ENCODE measurements at regions of chr14 and their contacts with region 1.

Region 1: GRCh38 chr14:100645192-100645990 is 58.2 kb upstream of the BEGAIN start:
- DNase-seq: peak; percentile 81
- H3K4me3 Mint-ChIP-seq: peak overlapping the region; percentile 34
- H3K27ac Mint-ChIP-seq: peak overlapping the region; percentile 20
- H3K4me1 Mint-ChIP-seq: peaks cover 45% of the 10 kb centered on the region
- H3K27me3 Mint-ChIP-seq: peaks cover 9% of the 10 kb centered on the region

Region 2: DNA sequence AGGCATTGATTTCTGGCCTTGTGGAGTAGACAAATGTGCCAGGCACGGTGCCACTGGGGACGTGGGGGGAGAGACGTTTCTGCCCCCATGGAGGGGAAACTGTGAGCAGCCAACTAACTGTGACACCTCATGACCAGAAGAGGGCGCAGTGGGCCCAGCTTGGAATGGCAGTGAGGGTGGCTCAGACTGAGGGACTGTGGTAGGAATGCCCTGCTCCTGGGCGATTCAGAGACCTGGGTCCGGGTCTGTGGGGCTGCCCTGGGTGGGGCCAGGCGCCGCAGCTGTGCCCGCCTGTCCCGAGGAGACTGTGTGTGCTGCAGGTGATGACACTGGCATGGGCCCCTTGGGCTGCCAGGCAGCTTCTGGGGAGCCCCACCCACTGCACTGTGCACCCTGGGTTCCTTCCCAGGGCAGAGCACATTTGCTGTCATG is 261.6 kb before region 1 on chr14:
- intact Hi-C with region 1: loop called (anchors 1 kb)
- DNase-seq: peak; percentile 53
- H3K4me3 Mint-ChIP-seq: no peak overlapping the region
- H3K27ac Mint-ChIP-seq: no peak overlapping the region
- H3K4me1 Mint-ChIP-seq: peaks cover 7% of the 10 kb centered on the region
- H3K27me3 Mint-ChIP-seq: no peaks in the 10 kb centered on the region

Region 3: GRCh38 chr14:100547633-100548294 is 97.6 kb before region 1 on chr14:
- intact Hi-C with region 1: loop called (anchors 5 kb)
- DNase-seq: peak; percentile 22
- H3K4me3 Mint-ChIP-seq: peak overlapping the region; percentile 7
- H3K27ac Mint-ChIP-seq: no peak overlapping the region
- H3K4me1 Mint-ChIP-seq: peaks cover 8% of the 10 kb centered on the region
- H3K27me3 Mint-ChIP-seq: no peaks in the 10 kb centered on the region

Region 4: DNA sequence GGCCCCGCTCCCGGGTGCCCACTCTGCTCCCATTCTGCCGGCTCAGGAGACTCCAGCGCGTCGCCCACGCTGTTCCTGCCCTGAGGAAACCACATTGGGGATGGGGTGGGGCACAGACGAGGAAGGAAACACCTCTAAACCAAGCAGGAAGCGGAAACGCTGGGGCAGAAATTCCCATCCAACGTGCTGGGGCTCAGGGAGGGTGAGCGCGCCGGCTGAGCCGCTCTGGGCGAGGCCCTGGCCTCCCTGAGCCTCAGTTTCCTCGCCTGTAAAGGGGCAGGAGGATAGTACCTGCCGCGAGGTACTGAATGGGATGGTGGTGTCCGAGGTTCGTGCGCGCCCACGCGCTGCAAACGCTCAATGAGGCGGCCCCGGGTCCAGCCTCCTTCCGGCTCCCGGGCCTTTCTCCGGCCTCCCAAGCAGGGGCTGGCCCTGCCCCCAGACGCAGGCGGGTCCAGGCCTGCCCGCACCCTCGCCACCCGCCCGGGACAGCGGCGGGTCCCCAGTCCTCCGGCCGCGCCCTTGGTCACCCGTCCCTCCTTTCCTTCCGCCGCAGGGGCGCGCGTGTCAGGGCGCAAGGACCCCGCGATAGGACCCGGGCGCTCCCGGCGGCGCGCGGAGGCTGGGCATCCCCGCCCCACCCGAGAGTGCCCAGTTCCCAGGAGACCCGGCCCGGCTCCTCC is 58.8 kb before region 1 on chr14:
- intact Hi-C with region 1: loop called (anchors 5 kb)
- DNase-seq: no peak
- H3K4me3 Mint-ChIP-seq: peak overlapping the region; percentile 70
- H3K27ac Mint-ChIP-seq: no peak overlapping the region
- H3K4me1 Mint-ChIP-seq: no peaks in the 10 kb centered on the region
- H3K27me3 Mint-ChIP-seq: peaks cover 17% of the 10 kb centered on the region

Measured in activated T-helper 2 cell treated with anti-CD3 and anti-CD28 coated beads, Interferon-gamma antibody, Interleukin-2, Interleukin-4, amounts not matched to agents 10 μg/mL and 5 μg/mL and 100 μg/mL, durations not matched to agents 14 hours and 24 hours and 36 hours (primary cell).